ENCODE measurements at regions of chr2 and their contacts with region 1.

Region 1: GRCh38 chr2:177148477-177149154 is 64.0 kb upstream of the HNRNPA3 start:
- DNase-seq: peak; percentile 88
- ATAC-seq: peak; percentile 99
- H3K4me3 ChIP-seq: peak overlapping the region; percentile 62
- H3K27ac ChIP-seq: no peak overlapping the region
- H3K4me1 ChIP-seq: peaks cover 9% of the 10 kb centered on the region; the same call in 1 of the 2 replicates
- H3K27me3 ChIP-seq: peaks cover 46% of the 10 kb centered on the region
- CTCF ChIP-seq: peak; percentile 95

Region 2: GRCh38 chr2:176126929-176127773 is 1021.5 kb before region 1 on chr2:
- CTCF ChIA-PET with region 1: interaction called, 8 read pairs
- POLR2A ChIA-PET with region 1: no interaction called
- intact Hi-C with region 1: loop called (anchors 1 kb)
- DNase-seq: peak; percentile 78
- ATAC-seq: 0 out of 2 replicates have a peak, but pooled peaks have one; percentile 14
- H3K4me3 ChIP-seq: peak overlapping the region; percentile 62
- H3K27ac ChIP-seq: no peak overlapping the region
- H3K4me1 ChIP-seq: peaks cover 10% of the 10 kb centered on the region
- H3K27me3 ChIP-seq: no peaks in the 10 kb centered on the region
- CTCF ChIP-seq: peak; percentile 93

Region 3: GRCh38 chr2:176814306-176815052 is 334.1 kb before region 1 on chr2:
- CTCF ChIA-PET with region 1: interaction called, 5 read pairs
- POLR2A ChIA-PET with region 1: no interaction called
- intact Hi-C with region 1: loop called (anchors 1 kb)
- DNase-seq: peak; percentile 70
- ATAC-seq: peak; percentile 89
- H3K4me3 ChIP-seq: peak overlapping the region; percentile 32; the same call in 1 of the 2 replicates
- H3K27ac ChIP-seq: no peak overlapping the region
- H3K4me1 ChIP-seq: peaks cover 14% of the 10 kb centered on the region
- H3K27me3 ChIP-seq: peaks cover 5% of the 10 kb centered on the region
- CTCF ChIP-seq: peak; percentile 56

Region 4: GRCh38 chr2:176978921-176979320 is 169.7 kb before region 1 on chr2:
- CTCF ChIA-PET with region 1: interaction called, 4 read pairs
- POLR2A ChIA-PET with region 1: no interaction called
- intact Hi-C with region 1: loop called (anchors 2 kb)
- DNase-seq: peak; percentile 17
- ATAC-seq: no peak
- H3K4me3 ChIP-seq: no peak overlapping the region
- H3K27ac ChIP-seq: no peak overlapping the region
- H3K4me1 ChIP-seq: no peaks in the 10 kb centered on the region
- H3K27me3 ChIP-seq: peaks cover 67% of the 10 kb centered on the region
- CTCF ChIP-seq: no peak; the same call in 1 of the 2 replicates

Region 5: DNA sequence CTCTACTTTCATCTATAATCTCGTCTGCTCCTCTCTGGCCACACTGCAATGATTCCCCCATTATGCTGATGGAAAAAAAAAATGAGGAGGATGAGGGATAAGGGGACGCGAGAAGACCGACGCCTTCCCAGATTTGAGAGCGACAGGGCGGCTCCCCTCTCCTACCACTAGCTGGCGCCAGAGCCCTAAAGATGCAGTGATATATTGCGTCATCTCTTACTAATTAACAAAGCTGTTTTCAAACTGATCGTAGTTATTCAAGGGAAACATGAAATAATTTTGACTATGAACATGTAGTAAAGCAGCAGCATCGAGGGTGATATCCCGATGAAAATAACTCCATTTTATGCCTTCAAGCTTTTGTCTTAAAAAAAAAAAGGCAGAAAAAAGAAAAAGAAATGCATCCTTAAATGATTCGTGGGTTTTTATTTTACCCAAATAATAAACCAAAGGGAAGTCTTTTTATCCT is 16.0 kb after region 1 on chr2:
- CTCF ChIA-PET with region 1: interaction called, 14 read pairs
- POLR2A ChIA-PET with region 1: interaction called, 3 read pairs
- intact Hi-C with region 1: no loop called
- DNase-seq: peak; percentile 83
- ATAC-seq: peak; percentile 51
- H3K4me3 ChIP-seq: peak overlapping the region; percentile 63
- H3K27ac ChIP-seq: no peak overlapping the region
- H3K4me1 ChIP-seq: peaks cover 40% of the 10 kb centered on the region
- H3K27me3 ChIP-seq: no peaks in the 10 kb centered on the region
- CTCF ChIP-seq: peak; percentile 99

Region 6: GRCh38 chr2:177520356-177520723 is 371.7 kb after region 1 on chr2:
- CTCF ChIA-PET with region 1: no interaction called
- POLR2A ChIA-PET with region 1: no interaction called
- intact Hi-C with region 1: no loop called
- DNase-seq: no peak
- ATAC-seq: no peak
- H3K4me3 ChIP-seq: no peak overlapping the region
- H3K27ac ChIP-seq: no peak overlapping the region
- H3K4me1 ChIP-seq: peaks cover 14% of the 10 kb centered on the region
- H3K27me3 ChIP-seq: no peaks in the 10 kb centered on the region
- CTCF ChIP-seq: no peak

Measured in PC-3 (cell line).